ENCODE measurements at regions of chr22 and their contacts with region 1.

Region 1: GRCh38 chr22:22942511-22943329 is 55.1 kb downstream of the IGLL5 start:
- DNase-seq: peak; percentile 90
- H3K4me3 Mint-ChIP-seq: no peak overlapping the region
- H3K27ac Mint-ChIP-seq: no peak overlapping the region
- H3K4me1 Mint-ChIP-seq: peaks cover 8% of the 10 kb centered on the region
- H3K27me3 Mint-ChIP-seq: peaks cover 24% of the 10 kb centered on the region

Region 2: DNA sequence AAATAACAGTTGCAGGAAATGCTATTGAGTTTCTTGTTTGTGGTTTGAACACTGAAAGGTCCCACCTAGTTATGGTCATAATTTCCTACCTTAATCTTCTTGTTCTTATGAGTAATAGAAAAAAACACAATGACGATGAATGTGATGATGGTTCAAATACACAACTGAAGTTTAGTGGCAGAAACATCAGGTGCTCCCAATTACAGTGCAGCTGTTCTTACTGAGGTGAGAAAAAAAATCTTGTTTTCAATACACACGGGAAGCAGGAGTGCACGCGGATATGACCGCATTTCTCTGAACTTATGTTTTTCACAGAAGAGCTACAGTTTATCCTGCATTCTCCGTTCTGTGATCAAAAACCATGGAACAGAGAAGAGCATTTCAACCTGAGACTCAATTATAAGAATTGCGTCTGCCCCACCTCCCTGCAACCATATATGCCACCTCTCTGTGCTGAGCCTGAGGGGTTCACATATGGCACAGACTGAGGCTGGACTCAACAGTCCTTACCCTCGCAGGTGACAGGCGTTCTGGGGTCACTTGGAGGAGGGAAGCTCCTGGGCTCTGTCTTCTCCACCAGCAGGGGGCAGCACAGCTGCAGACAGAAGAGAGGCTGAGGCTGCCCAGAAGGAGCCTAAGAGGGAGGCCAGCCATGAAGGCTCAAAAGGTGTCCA is 154.8 kb before region 1 on chr22:
- intact Hi-C with region 1: loop called (anchors 10 kb)
- DNase-seq: peak; percentile 92
- H3K4me3 Mint-ChIP-seq: no peak overlapping the region
- H3K27ac Mint-ChIP-seq: no peak overlapping the region
- H3K4me1 Mint-ChIP-seq: peaks cover 4% of the 10 kb centered on the region
- H3K27me3 Mint-ChIP-seq: peaks cover 22% of the 10 kb centered on the region